Endothelial cell of umbilical vein (primary cell): ENCODE measurements at regions of chr6 and their contacts with region 1.

Region 1: DNA sequence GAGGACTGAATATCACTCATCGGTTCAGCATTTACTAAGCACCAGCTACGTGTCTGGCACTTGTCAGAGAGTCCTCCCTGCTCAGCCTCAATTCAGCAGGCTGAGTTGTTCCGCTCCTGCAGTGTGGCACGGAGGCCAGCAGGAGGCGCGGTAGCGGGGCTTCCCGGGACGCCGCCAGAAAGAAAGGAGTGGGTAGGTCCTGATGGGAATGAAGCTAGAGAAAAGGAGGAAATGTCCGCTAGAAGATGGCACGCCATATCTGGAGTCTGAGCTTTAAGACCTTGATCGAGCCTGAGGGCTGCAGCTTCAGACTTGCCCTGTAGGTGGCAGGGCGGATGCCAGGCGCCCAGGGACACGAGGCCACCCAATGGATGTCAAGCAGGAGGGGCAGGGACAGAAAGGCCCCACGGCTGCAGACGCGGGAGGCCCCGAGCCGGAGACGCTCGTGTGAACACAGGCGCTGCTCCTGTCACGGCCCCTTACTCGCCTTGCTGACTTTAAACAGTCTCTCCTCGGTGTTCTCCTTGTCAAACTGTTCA is 18.7 kb downstream of the SERPINB6 start:
- DNase-seq: peak; percentile 92
- H3K4me3 ChIP-seq: no peak overlapping the region
- H3K27ac ChIP-seq: no peak overlapping the region
- H3K4me1 ChIP-seq: peaks cover 3% of the 10 kb centered on the region
- H3K27me3 ChIP-seq: no peaks in the 10 kb centered on the region
- CTCF ChIP-seq: peak; percentile 91 to 99
- POLR2A ChIP-seq: no peak

Region 2: GRCh38 chr6:2765166-2765895 is 187.3 kb before region 1 on chr6 and contains the start of gene WRNIP1:
- CTCF ChIA-PET with region 1: interaction called, 12 read pairs
- POLR2A ChIA-PET with region 1: no interaction called
- dilution Hi-C with region 1: no loop called
- intact Hi-C with region 1: no loop called
- DNase-seq: peak; percentile 99
- H3K4me3 ChIP-seq: peak within 1 kb of the TSS; percentile 72 to 98 (median 97)
- H3K27ac ChIP-seq: peak within 1 kb of the TSS; percentile 79
- H3K4me1 ChIP-seq: peaks cover 40% of the 10 kb centered on the region
- H3K27me3 ChIP-seq: no peaks in the 10 kb centered on the region
- CTCF ChIP-seq: peak; percentile 65 to 66
- POLR2A ChIP-seq: no peak
- total RNA-seq, gene WRNIP1: 47.7 and 50.1 TPM in 2 replicates

Region 3: DNA sequence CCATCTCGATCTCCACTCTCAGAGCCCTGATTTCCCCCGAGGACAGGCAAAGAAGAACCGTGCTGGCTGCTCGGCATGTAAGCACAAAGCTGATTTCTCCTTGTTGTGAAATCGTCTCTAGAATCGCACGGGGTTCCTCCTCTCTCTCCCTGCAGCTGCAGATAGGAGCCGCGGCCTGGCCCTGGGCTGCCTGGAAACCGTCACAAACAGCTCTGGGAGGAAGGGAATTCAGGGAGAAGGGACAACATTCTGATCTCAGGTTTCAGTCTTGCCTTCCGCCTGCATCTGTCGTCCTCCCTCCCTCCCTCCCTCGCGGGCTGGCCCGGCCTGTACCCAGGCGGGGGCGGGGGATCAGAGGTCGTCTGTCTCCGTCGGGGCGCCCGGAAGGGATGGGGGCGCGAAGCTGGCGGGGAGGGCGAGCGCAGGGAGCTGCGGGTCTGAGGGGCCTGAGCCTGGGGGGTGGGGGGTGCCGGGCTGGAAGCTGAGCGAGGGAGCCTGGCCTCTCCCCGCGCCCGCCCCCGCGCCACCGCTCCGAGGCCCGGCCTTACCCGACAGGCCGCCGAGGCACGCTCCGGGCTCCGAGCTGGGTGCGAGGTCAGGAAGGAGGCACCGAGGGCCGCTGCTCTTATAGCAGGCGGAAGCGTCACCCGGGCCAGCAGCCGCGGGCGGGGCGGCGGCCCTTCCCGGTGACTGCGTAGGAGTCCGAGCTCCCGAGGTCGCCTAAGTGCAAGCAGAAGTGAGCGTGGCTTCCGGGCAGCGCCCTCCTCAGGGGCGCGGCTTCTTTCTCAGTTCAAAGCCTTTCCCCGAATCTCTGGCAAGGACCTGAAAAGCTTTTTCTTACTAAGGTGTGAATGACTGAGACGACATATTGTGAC is 111.1 kb before region 1 on chr6 and contains the start of gene SERPINB1:
- CTCF ChIA-PET with region 1: interaction called, 45 read pairs
- POLR2A ChIA-PET with region 1: no interaction called
- dilution Hi-C with region 1: no loop called
- intact Hi-C with region 1: loop called (anchors 1 kb)
- DNase-seq: peak; percentile 88
- H3K4me3 ChIP-seq: peak within 1 kb of the TSS; percentile 33 to 44 (median 38)
- H3K27ac ChIP-seq: peak within 1 kb of the TSS; percentile 62
- H3K4me1 ChIP-seq: peaks cover 37% of the 10 kb centered on the region
- H3K27me3 ChIP-seq: no peaks in the 10 kb centered on the region
- CTCF ChIP-seq: no peak
- POLR2A ChIP-seq: no peak
- total RNA-seq, gene SERPINB1: 23.3 and 24.0 TPM in 2 replicates

Region 4: DNA sequence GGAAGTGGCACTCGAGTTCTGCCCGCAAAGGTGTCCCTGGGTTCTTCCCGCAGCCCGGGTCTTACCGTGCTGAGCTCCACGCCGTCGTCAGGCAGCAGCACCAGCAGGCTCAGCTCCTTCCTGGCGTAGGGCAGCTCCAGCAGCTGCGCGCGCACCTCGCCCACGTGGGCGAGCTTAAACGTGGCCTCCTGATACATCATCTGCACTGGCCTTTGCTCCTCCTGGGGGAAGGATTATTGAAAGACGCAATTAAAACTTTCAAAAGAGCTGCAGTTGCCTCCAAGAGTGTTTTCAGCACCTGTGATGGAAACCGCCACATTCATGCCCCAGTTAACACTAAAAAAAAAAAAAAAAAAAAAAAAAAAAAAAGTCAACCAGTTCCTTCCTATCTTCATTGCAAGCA is 60.9 kb before region 1 on chr6:
- CTCF ChIA-PET with region 1: no interaction called
- POLR2A ChIA-PET with region 1: no interaction called
- dilution Hi-C with region 1: no loop called
- intact Hi-C with region 1: no loop called
- DNase-seq: no peak
- H3K4me3 ChIP-seq: no peak overlapping the region
- H3K27ac ChIP-seq: no peak overlapping the region
- H3K4me1 ChIP-seq: no peaks in the 10 kb centered on the region
- H3K27me3 ChIP-seq: no peaks in the 10 kb centered on the region
- CTCF ChIP-seq: no peak
- POLR2A ChIP-seq: no peak

Region 5: GRCh38 chr6:2917065-2917464 is 35.6 kb before region 1 on chr6:
- CTCF ChIA-PET with region 1: interaction called, 9 read pairs
- POLR2A ChIA-PET with region 1: no interaction called
- dilution Hi-C with region 1: no loop called
- intact Hi-C with region 1: loop called (anchors 1 kb)
- DNase-seq: no peak
- H3K4me3 ChIP-seq: no peak overlapping the region
- H3K27ac ChIP-seq: no peak overlapping the region
- H3K4me1 ChIP-seq: no peaks in the 10 kb centered on the region
- H3K27me3 ChIP-seq: no peaks in the 10 kb centered on the region
- CTCF ChIP-seq: no peak
- POLR2A ChIP-seq: no peak

Region 6: DNA sequence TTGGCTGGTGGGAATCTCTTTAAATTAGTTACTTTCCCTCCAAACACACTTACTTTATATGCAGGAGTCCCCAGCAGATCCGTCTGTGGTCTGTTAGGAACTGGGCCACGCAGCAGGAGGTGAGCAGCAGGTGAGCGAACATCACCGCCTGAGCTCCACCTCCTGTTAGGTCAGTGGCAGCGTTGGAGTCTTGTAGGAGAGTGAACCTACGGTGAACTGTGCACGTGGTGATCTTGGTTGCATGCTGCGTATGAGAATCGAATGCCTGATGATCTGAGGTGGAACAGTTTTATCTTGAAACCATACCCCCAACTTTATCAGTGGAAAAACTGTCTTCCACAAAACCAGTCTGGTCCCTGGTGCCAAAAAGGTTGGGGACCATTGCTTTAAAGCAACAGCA is 13.7 kb after region 1 on chr6:
- CTCF ChIA-PET with region 1: interaction called, 22 read pairs
- POLR2A ChIA-PET with region 1: no interaction called
- dilution Hi-C with region 1: no loop called
- intact Hi-C with region 1: loop called (anchors 1 kb)
- DNase-seq: no peak
- H3K4me3 ChIP-seq: no peak overlapping the region
- H3K27ac ChIP-seq: no peak overlapping the region
- H3K4me1 ChIP-seq: peaks cover 7% of the 10 kb centered on the region
- H3K27me3 ChIP-seq: no peaks in the 10 kb centered on the region
- CTCF ChIP-seq: no peak
- POLR2A ChIP-seq: no peak

Region 7: DNA sequence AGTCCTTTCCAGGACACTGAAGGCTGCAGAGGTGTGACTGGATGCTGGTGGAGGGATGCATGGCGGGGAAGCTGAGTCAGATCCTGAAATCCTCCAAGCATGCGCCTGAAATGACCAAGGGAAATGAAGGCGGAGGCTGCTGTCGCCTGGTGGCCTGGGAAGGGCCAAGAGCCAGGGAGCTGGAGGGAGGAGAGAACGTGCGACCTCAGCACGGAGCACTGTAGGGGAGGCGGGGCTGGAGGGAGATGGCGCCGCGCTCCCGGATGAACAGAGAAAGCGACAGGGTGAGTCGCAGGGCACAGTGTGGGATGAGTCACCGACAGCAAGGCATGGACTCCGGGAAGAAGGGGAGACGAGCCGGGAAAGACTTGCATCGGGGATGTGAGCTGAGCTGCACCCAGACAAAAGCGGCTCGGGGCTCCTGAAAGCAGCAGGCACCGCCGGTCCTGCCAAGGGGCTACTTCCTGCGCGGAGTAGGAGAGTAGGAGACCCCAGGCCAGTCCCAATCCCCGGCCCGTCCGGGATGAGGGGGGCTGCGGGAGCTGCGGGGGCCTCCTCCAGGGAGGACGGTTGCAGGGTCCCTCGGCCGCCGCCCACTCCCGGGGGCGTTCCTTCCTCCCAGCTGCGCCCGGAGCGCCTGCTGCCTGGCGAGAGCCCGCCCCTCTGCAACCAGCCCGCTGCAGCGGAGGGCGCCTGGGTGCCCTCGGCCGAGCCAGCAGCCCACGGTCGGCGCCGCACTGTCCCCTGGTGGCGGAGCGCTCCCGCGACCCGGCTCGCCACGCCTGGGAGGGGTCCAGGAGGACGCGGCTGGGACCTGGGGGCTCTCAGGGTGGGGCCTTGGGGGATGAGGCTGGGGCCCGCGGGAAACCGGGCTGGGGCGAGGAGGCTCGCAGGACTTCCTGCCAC is 36.1 kb after region 1 on chr6:
- CTCF ChIA-PET with region 1: interaction called, 331 read pairs
- POLR2A ChIA-PET with region 1: interaction called, 10 read pairs
- dilution Hi-C with region 1: no loop called
- intact Hi-C with region 1: loop called (anchors 1 kb)
- DNase-seq: peak; percentile 98
- H3K4me3 ChIP-seq: peak overlapping the region; percentile 53 to 78 (median 68)
- H3K27ac ChIP-seq: peak overlapping the region; percentile 84
- H3K4me1 ChIP-seq: peaks cover 15% of the 10 kb centered on the region
- H3K27me3 ChIP-seq: no peaks in the 10 kb centered on the region
- CTCF ChIP-seq: peak; percentile 80 to 82
- POLR2A ChIP-seq: peak; percentile 93